Dendritic cell treated with granulocyte-macrophage colony-stimulating factor and Interleukin-4, amounts not matched to agents 40 ng/mL and 50 ng/mL, for 4 days (primary cell): ENCODE measurements at regions of chr1 and their contacts with region 1.

Region 1: GRCh38 chr1:219566951-219567947 is 45.7 kb downstream of the ZC3H11B start:
- H3K4me3 Mint-ChIP-seq: no peak overlapping the region
- H3K27ac Mint-ChIP-seq: no peak overlapping the region
- H3K4me1 Mint-ChIP-seq: peaks cover 31% of the 10 kb centered on the region
- H3K27me3 Mint-ChIP-seq: peaks cover 23% of the 10 kb centered on the region

Region 2: GRCh38 chr1:218339267-218339831 is 1227.9 kb before region 1 on chr1:
- intact Hi-C with region 1: loop called (anchors 5 kb)
- H3K4me3 Mint-ChIP-seq: no peak overlapping the region
- H3K27ac Mint-ChIP-seq: no peak overlapping the region
- H3K4me1 Mint-ChIP-seq: no peaks in the 10 kb centered on the region
- H3K27me3 Mint-ChIP-seq: peaks cover 8% of the 10 kb centered on the region

Region 3: DNA sequence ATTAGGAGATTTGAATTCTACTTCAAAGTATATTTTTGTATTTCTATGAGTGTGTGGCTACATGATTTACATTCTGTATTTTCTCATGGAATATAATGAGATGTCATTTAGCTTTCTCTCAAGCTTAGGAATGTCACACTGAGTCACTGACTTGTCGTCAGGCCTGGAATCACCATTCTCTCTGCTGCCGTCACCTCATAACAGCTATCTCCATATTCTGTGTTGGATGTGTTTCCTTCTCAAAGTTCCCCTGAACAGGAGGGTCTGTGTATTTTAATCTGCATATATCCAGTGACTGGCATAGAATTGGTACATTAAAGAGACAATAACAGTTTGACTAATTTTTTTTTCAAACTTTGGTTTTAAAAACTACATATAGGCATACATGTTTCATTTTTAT is 357.7 kb before region 1 on chr1:
- intact Hi-C with region 1: loop called (anchors 2 kb)
- H3K4me3 Mint-ChIP-seq: no peak overlapping the region
- H3K27ac Mint-ChIP-seq: no peak overlapping the region
- H3K4me1 Mint-ChIP-seq: peaks cover 6% of the 10 kb centered on the region
- H3K27me3 Mint-ChIP-seq: no peaks in the 10 kb centered on the region

Region 4: GRCh38 chr1:219587805-219588561 is 20.7 kb after region 1 on chr1:
- intact Hi-C with region 1: loop called (anchors 1 kb)
- H3K4me3 Mint-ChIP-seq: peak overlapping the region; percentile 60
- H3K27ac Mint-ChIP-seq: peak overlapping the region; percentile 85
- H3K4me1 Mint-ChIP-seq: peaks cover 55% of the 10 kb centered on the region
- H3K27me3 Mint-ChIP-seq: no peaks in the 10 kb centered on the region

Region 5: GRCh38 chr1:219660666-219661463 is 93.6 kb after region 1 on chr1:
- intact Hi-C with region 1: loop called (anchors 2 kb)
- H3K4me3 Mint-ChIP-seq: peak overlapping the region; percentile 66
- H3K27ac Mint-ChIP-seq: no peak overlapping the region
- H3K4me1 Mint-ChIP-seq: peaks cover 13% of the 10 kb centered on the region
- H3K27me3 Mint-ChIP-seq: peaks cover 2% of the 10 kb centered on the region

Region 6: GRCh38 chr1:219784660-219785381 is 217.6 kb after region 1 on chr1:
- intact Hi-C with region 1: no loop called
- H3K4me3 Mint-ChIP-seq: no peak overlapping the region
- H3K27ac Mint-ChIP-seq: no peak overlapping the region
- H3K4me1 Mint-ChIP-seq: peaks cover 5% of the 10 kb centered on the region
- H3K27me3 Mint-ChIP-seq: no peaks in the 10 kb centered on the region